Panc1 (cell line): ENCODE measurements at regions of chr1 and their contacts with region 1.

Region 1: GRCh38 chr1:150869683-150870082 is 6.7 kb downstream of the ARNT start:
- DNase-seq: no peak
- ATAC-seq: no peak; the same call in 1 of the 2 replicates
- H3K4me3 ChIP-seq: no peak overlapping the region
- H3K27ac ChIP-seq: no peak overlapping the region
- H3K4me1 ChIP-seq: peaks cover 3% of the 10 kb centered on the region; the same call in 1 of the 2 replicates
- H3K27me3 ChIP-seq: no peaks in the 10 kb centered on the region
- CTCF ChIP-seq: no peak

Region 2: DNA sequence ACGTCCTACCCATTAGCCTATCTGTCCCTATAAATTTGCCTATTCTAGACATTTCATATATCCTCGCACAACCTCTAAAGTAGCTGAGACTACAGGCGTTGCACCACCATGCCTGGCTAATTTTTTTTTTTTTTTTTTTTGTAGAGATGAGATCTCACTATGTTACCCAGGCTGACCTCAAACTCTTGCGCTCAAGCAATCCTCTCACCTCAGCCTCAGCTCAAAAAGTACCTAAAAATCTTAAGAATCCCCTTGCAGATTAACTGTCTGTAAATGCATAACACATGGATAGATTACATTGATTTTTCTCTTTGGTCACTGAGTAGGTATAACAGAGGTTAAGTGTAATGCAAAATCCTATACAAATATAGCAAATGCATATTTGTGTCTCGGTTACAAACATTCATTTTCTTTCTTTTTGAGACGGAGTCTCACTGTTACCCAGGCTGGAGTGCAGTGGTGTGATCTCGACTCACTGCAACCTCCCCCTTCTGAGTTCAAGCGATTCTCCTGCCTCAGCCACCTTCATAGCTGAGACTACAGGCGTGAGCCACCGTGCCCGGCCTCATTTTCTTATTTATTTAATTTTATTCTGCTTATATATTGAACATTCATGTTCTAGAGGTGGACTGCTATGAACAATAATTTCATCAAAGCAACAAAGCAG is 151.3 kb before region 1 on chr1:
- CTCF ChIA-PET with region 1: no interaction called
- POLR2A ChIA-PET with region 1: no interaction called
- in situ Hi-C with region 1: no loop called
- intact Hi-C with region 1: no loop called
- DNase-seq: no peak
- ATAC-seq: no peak
- H3K4me3 ChIP-seq: no peak overlapping the region
- H3K27ac ChIP-seq: no peak overlapping the region
- H3K4me1 ChIP-seq: no peaks in the 10 kb centered on the region
- H3K27me3 ChIP-seq: no peaks in the 10 kb centered on the region
- CTCF ChIP-seq: no peak

Region 3: GRCh38 chr1:150925816-150926741 is 56.4 kb after region 1 on chr1 and contains the start of gene SETDB1:
- CTCF ChIA-PET with region 1: no interaction called
- POLR2A ChIA-PET with region 1: interaction called, 13 read pairs
- in situ Hi-C with region 1: no loop called
- intact Hi-C with region 1: no loop called
- DNase-seq: peak; percentile 92
- ATAC-seq: peak; percentile 99
- H3K4me3 ChIP-seq: peak within 1 kb of the TSS; percentile 66 to 96
- H3K27ac ChIP-seq: peak within 1 kb of the TSS; percentile 97
- H3K4me1 ChIP-seq: no peaks in the 10 kb centered on the region; the same call in 1 of the 2 replicates
- H3K27me3 ChIP-seq: no peaks in the 10 kb centered on the region
- CTCF ChIP-seq: no peak
- total RNA-seq, gene SETDB1: 43.3 TPM

Region 4: GRCh38 chr1:151008190-151008860 is 138.6 kb after region 1 on chr1 and contains the start of gene PRUNE1:
- CTCF ChIA-PET with region 1: no interaction called
- POLR2A ChIA-PET with region 1: no interaction called
- in situ Hi-C with region 1: no loop called
- intact Hi-C with region 1: no loop called
- DNase-seq: peak; percentile 91
- ATAC-seq: peak; percentile 87
- H3K4me3 ChIP-seq: peak within 1 kb of the TSS; percentile 91 to 95
- H3K27ac ChIP-seq: peak within 1 kb of the TSS; percentile 94
- H3K4me1 ChIP-seq: peaks cover 7% of the 10 kb centered on the region
- H3K27me3 ChIP-seq: no peaks in the 10 kb centered on the region
- CTCF ChIP-seq: no peak
- total RNA-seq, gene PRUNE1: 16.2 TPM